Activated B cell treated with CpG ODN at 0.5 μM for 24 hours (primary cell): ENCODE measurements at regions of chr6 and their contacts with region 1.

Region 1: GRCh38 chr6:117602151-117602898 is at the start of gene GOPC:
- DNase-seq: peak; percentile 85
- ATAC-seq: peak; percentile 96
- H3K4me3 Mint-ChIP-seq: peak within 1 kb of the TSS; percentile 100
- H3K27ac Mint-ChIP-seq: peak within 1 kb of the TSS; percentile 99
- H3K4me1 Mint-ChIP-seq: peaks cover 46% of the 10 kb centered on the region
- H3K27me3 Mint-ChIP-seq: no peaks in the 10 kb centered on the region
- CTCF ChIP-seq: no peak
- total RNA-seq, gene GOPC: 17.1 and 19.5 TPM in 2 replicates

Region 2: DNA sequence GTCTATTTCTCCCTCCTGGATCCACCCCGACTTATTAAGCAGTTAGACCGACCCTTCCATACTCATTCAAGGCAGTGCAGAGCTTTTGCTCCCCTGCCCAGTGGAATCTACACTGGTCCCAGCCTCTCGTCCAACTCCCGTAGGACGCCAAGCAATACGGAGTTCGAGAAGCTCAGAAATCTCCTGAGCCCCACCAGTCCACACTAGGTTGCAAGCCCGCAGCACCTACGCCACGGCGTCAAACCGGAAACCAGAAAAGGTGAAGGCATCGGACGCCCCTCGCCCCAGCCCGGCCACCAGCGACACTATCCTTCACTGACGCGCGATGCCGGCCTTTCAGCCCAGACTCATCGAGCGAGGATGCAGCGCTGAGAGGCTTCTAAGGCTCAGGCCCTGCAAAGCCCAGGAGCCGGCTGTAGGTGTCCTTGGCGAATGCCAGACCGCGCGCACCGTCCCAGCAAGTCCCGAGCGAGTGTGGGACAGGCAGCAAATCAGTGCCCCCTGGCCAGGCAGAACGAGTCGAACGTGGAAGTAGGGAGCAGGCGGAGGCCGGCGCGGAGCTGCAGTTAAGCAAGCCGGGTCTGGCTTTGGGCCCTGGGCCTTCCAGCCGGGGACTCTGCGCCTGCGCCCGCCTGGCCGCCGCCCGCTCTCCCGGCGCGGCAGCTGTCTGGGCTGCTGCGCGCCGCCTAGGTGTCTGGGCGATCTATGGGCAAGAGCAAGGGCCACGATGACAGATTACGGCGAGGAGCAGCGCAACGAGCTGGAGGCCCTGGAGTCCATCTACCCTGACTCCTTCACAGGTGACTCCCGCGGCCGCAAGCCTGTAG is 1031.3 kb before region 1 on chr6 and contains the start of gene RWDD1:
- CTCF ChIA-PET with region 1: no interaction called
- POLR2A ChIA-PET with region 1: interaction called, 3 read pairs
- intact Hi-C with region 1: loop called (anchors 5 kb)
- DNase-seq: peak; percentile 94
- ATAC-seq: peak; percentile 94
- H3K4me3 Mint-ChIP-seq: peak within 1 kb of the TSS; percentile 95
- H3K27ac Mint-ChIP-seq: peak within 1 kb of the TSS; percentile 96
- H3K4me1 Mint-ChIP-seq: peaks cover 51% of the 10 kb centered on the region
- H3K27me3 Mint-ChIP-seq: no peaks in the 10 kb centered on the region
- CTCF ChIP-seq: no peak
- total RNA-seq, gene RWDD1: 30.9 and 33.8 TPM in 2 replicates

Region 3: GRCh38 chr6:117346142-117346930 is 256.0 kb before region 1 on chr6:
- CTCF ChIA-PET with region 1: interaction called, 4 read pairs
- POLR2A ChIA-PET with region 1: no interaction called
- intact Hi-C with region 1: loop called (anchors 1 kb)
- DNase-seq: no peak
- ATAC-seq: no peak
- H3K4me3 Mint-ChIP-seq: no peak overlapping the region
- H3K27ac Mint-ChIP-seq: no peak overlapping the region
- H3K4me1 Mint-ChIP-seq: no peaks in the 10 kb centered on the region
- H3K27me3 Mint-ChIP-seq: peaks cover 1% of the 10 kb centered on the region
- CTCF ChIP-seq: no peak

Region 4: DNA sequence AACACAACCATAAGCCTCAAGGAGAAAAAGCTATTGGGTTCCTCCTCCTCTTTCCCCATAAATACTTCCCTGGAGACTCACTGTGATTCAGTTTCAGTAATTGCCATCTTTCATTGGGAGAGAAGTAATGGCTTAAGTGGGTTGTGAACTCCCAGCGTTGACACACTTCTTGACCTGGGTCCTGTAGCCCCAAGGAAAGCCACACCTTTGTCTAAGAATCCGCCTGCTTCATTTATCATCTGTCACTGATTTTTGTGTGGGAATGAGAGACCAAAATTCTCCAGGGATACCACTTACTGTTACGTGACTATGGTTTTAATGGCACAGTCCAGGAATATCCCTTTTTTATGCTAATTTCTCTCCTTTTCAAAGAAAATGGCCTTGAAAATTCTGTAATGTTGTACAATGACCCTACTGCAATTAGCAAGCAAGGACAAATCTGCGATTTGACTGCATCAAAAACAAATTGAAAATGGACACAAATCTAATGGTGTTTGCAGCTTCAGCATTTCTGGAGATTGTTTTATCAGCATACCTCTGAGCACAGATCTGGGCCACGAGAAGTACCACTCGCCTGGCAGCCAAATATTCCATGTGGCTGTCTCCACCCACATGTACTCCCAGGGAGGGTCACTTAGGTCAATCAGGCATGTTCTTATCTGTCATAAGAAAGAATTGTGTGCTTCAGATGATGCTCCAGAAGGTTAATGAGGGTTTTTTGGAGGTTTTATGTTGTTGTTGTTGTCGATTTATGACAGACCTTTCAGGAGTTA is 90.1 kb before region 1 on chr6:
- CTCF ChIA-PET with region 1: no interaction called
- POLR2A ChIA-PET with region 1: no interaction called
- intact Hi-C with region 1: no loop called
- DNase-seq: no peak
- ATAC-seq: no peak
- H3K4me3 Mint-ChIP-seq: no peak overlapping the region
- H3K27ac Mint-ChIP-seq: no peak overlapping the region
- H3K4me1 Mint-ChIP-seq: no peaks in the 10 kb centered on the region
- H3K27me3 Mint-ChIP-seq: peaks cover 16% of the 10 kb centered on the region
- CTCF ChIP-seq: no peak

Region 5: GRCh38 chr6:117555882-117556498 is 46.3 kb before region 1 on chr6:
- CTCF ChIA-PET with region 1: interaction called, 3 read pairs
- POLR2A ChIA-PET with region 1: no interaction called
- intact Hi-C with region 1: loop called (anchors 1 kb)
- DNase-seq: no peak
- ATAC-seq: peak; percentile 45
- H3K4me3 Mint-ChIP-seq: no peak overlapping the region
- H3K27ac Mint-ChIP-seq: no peak overlapping the region
- H3K4me1 Mint-ChIP-seq: peaks cover 2% of the 10 kb centered on the region
- H3K27me3 Mint-ChIP-seq: peaks cover 2% of the 10 kb centered on the region
- CTCF ChIP-seq: peak; percentile 82

Region 6: GRCh38 chr6:117674991-117675657 is 72.8 kb after region 1 on chr6 and contains the start of gene NUS1:
- CTCF ChIA-PET with region 1: no interaction called
- POLR2A ChIA-PET with region 1: interaction called, 9 read pairs
- intact Hi-C with region 1: loop called (anchors 1 kb)
- DNase-seq: peak; percentile 97
- ATAC-seq: peak; percentile 98
- H3K4me3 Mint-ChIP-seq: peak within 1 kb of the TSS; percentile 95
- H3K27ac Mint-ChIP-seq: peak within 1 kb of the TSS; percentile 89
- H3K4me1 Mint-ChIP-seq: peaks cover 42% of the 10 kb centered on the region
- H3K27me3 Mint-ChIP-seq: no peaks in the 10 kb centered on the region
- CTCF ChIP-seq: no peak
- total RNA-seq, gene NUS1: 29.1 and 30.6 TPM in 2 replicates

Region 7: GRCh38 chr6:118800394-118801071 is 1198.2 kb after region 1 on chr6:
- CTCF ChIA-PET with region 1: no interaction called
- POLR2A ChIA-PET with region 1: no interaction called
- intact Hi-C with region 1: loop called (anchors 10 kb)
- DNase-seq: peak; percentile 34
- ATAC-seq: peak; percentile 91
- H3K4me3 Mint-ChIP-seq: peak overlapping the region; percentile 52
- H3K27ac Mint-ChIP-seq: no peak overlapping the region
- H3K4me1 Mint-ChIP-seq: peaks cover 25% of the 10 kb centered on the region
- H3K27me3 Mint-ChIP-seq: no peaks in the 10 kb centered on the region
- CTCF ChIP-seq: peak; percentile 25